Activated CD4-positive, alpha-beta memory T cell treated with anti-CD3 and anti-CD28 coated beads for 36 hours (primary cell): ENCODE measurements at regions of chr9 and their contacts with region 1.

Region 1: GRCh38 chr9:21326526-21327139 is 8.6 kb downstream of the KLHL9 start:
- DNase-seq: no peak
- H3K4me3 Mint-ChIP-seq: no peak overlapping the region
- H3K27ac Mint-ChIP-seq: no peak overlapping the region
- H3K4me1 Mint-ChIP-seq: peaks cover 43% of the 10 kb centered on the region
- H3K27me3 Mint-ChIP-seq: no peaks in the 10 kb centered on the region

Region 2: GRCh38 chr9:21205204-21205603 is 121.4 kb before region 1 on chr9:
- CTCF ChIA-PET with region 1: no interaction called
- POLR2A ChIA-PET with region 1: no interaction called
- intact Hi-C with region 1: no loop called
- DNase-seq: no peak
- H3K4me3 Mint-ChIP-seq: no peak overlapping the region
- H3K27ac Mint-ChIP-seq: no peak overlapping the region
- H3K4me1 Mint-ChIP-seq: peaks cover 7% of the 10 kb centered on the region
- H3K27me3 Mint-ChIP-seq: peaks cover 30% of the 10 kb centered on the region

Region 3: DNA sequence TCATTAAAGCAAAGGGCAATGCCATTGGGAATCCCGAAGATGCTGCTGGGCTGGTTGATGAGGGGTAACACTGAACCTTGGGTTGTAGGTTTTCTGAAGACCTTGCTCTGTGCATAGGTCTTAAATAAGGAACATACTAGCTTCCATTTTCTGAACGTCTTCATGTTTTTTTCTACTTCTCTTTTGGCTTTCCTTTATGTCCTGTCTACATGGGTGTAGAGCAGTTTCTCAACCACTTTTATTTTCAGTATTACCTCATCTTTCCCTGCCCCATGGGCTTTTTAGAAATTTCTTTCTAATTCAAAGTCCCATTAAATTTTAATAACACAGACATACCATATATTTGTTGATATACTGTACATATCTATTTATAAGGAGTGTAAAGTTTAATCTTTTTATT is 86.7 kb before region 1 on chr9 and contains the start of gene IFNA14:
- CTCF ChIA-PET with region 1: interaction called, 10 read pairs
- POLR2A ChIA-PET with region 1: no interaction called
- intact Hi-C with region 1: no loop called
- DNase-seq: no peak
- H3K4me3 Mint-ChIP-seq: no peak within 1 kb of the TSS
- H3K27ac Mint-ChIP-seq: no peak within 1 kb of the TSS
- H3K4me1 Mint-ChIP-seq: peaks cover 9% of the 10 kb centered on the region
- H3K27me3 Mint-ChIP-seq: peaks cover 11% of the 10 kb centered on the region
- total RNA-seq, gene IFNA14: not detected

Region 4: GRCh38 chr9:21402386-21403251 is 76.0 kb after region 1 on chr9:
- CTCF ChIA-PET with region 1: interaction called, 15 read pairs
- POLR2A ChIA-PET with region 1: no interaction called
- intact Hi-C with region 1: no loop called
- DNase-seq: peak; percentile 28
- H3K4me3 Mint-ChIP-seq: peak overlapping the region; percentile 41
- H3K27ac Mint-ChIP-seq: no peak overlapping the region
- H3K4me1 Mint-ChIP-seq: peaks cover 5% of the 10 kb centered on the region
- H3K27me3 Mint-ChIP-seq: peaks cover 48% of the 10 kb centered on the region

Region 5: DNA sequence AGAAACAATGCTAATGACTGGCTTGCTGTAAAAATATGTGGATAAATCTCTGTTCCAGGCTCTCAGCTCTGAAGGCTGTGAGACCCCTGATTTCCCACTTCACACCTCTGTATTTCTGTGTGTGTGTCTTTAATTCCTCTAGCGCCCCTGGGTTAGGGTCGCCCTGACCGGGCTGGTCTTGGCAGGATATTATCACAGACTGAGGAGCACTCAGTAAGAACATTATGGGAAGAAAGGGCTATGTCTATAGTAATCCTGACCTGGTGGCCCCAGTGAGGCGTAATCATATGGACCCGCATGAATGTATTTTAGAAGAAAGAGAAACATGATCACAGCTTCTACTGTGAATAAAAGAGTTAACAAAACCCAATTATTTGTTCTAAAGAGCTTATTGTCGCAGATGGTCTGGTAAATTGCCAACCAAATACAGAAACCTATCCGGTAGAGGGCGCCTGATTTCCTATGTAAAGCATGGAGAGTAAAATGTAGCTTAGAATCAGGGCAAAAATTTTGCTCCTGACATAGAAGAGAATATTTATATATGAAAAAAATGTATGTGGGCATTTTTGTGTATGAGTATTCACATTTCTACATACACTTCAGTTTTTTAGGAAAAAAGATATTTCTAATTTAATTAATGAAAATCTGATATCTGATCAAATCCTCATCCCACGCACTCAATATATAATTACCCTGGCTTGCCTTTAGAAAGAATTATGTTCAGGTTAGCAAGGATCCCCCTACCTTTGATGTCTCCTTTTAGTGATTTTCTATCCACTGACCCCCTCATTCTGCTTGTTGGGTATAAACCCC is 107.8 kb after region 1 on chr9:
- CTCF ChIA-PET with region 1: interaction called, 12 read pairs
- POLR2A ChIA-PET with region 1: no interaction called
- intact Hi-C with region 1: no loop called
- DNase-seq: peak; percentile 35
- H3K4me3 Mint-ChIP-seq: no peak overlapping the region
- H3K27ac Mint-ChIP-seq: no peak overlapping the region
- H3K4me1 Mint-ChIP-seq: no peaks in the 10 kb centered on the region
- H3K27me3 Mint-ChIP-seq: peaks cover 13% of the 10 kb centered on the region

Region 6: DNA sequence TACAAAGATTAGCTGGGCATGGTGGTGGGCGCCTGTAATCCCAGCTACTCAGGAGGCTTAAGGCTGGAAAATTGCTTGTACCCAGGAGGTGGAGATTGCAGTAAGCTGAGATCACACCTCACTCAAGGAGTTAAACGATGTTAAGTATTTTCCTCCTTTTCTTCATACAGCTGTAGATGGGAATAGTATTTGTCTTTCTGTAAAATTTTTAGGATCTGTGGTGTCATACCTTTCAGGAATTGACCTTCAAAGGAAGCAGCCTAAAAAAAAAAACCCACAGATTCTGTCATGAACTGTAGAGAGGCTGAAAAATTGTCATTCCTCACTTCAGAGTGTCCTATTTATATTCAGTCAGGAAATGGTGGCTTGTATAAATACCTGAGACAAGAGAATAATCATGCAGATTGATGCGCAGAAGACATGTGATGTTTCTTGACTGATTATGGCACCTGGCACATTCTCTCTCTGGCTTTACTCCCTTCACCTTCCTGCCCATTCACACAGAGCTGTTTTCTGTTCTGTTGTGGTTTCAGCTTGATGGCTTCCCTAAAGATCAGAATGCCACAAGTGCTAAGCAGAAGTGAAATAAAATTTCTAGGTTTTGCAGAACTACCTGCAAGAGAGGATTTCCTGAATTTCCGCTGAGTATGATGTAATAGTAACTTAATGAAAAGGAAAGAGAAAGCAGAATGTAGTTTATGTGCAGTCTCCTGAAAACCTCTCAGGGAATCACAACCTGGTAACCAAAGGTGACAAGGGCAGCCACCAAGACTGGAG is 117.4 kb after region 1 on chr9:
- CTCF ChIA-PET with region 1: interaction called, 12 read pairs
- POLR2A ChIA-PET with region 1: no interaction called
- intact Hi-C with region 1: no loop called
- DNase-seq: no peak
- H3K4me3 Mint-ChIP-seq: no peak overlapping the region
- H3K27ac Mint-ChIP-seq: no peak overlapping the region
- H3K4me1 Mint-ChIP-seq: peaks cover 10% of the 10 kb centered on the region
- H3K27me3 Mint-ChIP-seq: no peaks in the 10 kb centered on the region

Region 7: GRCh38 chr9:21559424-21560280 is 233.0 kb after region 1 on chr9:
- CTCF ChIA-PET with region 1: interaction called, 3 read pairs
- POLR2A ChIA-PET with region 1: no interaction called
- intact Hi-C with region 1: loop called (anchors 5 kb)
- DNase-seq: peak; percentile 54
- H3K4me3 Mint-ChIP-seq: peak overlapping the region; percentile 85
- H3K27ac Mint-ChIP-seq: no peak overlapping the region
- H3K4me1 Mint-ChIP-seq: peaks cover 27% of the 10 kb centered on the region
- H3K27me3 Mint-ChIP-seq: peaks cover 37% of the 10 kb centered on the region